HepG2 (cell line): ENCODE measurements at regions of chr5 and their contacts with region 1.

Region 1: DNA sequence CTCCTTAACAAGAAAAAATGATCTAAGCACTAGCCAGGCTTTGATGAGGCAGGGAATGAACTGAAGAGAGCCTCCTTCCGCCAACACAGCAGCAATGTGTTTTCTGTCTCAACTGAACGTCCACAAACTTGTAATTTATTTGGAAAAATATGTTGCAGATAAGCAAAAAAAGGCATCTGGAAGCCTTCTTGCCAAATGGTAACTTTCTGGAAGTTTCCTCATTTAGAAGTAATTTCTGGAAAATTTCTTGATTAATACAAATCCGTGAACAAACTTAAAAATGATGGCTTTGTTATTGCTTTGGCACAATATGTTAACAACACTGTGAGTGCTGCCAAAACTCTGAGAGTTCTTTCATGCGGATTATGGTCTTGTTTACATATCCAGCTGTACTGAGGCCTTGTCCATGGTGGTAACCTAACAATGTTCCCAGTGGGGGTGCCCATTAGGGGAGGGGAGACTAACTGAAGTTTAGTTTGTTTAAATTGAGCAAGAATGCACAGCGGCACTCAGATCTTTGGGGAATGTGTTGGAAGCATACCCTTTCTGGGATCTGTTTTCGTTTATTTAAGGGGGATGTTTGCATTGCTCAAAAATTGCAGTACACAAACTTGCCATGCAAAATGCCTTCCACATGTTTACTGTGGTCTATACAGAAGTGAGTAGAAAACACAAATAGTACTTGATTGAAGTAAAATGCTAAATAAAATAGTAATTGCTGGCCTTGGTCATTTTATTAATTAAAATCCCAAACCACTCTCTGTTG is 334.7 kb downstream of the NR2F1-AS1 start:
- DNase-seq: peak; percentile 100
- ATAC-seq: peak; percentile 100
- H3K4me3 ChIP-seq: peak overlapping the region in 1 of 3 experiments; percentile 32; a peak in 1 of 6 replicates
- H3K27ac ChIP-seq: peak overlapping the region; percentile 88
- H3K4me1 ChIP-seq: peaks cover 72% of the 10 kb centered on the region
- H3K27me3 ChIP-seq: no peaks in the 10 kb centered on the region
- CTCF ChIP-seq: no peak
- EP300 ChIP-seq: peak; percentile 86 to 99
- POLR2A ChIP-seq: no peak
- RAD21 ChIP-seq: peak; percentile 18; the same call in 1 of the 2 replicates

Region 2: DNA sequence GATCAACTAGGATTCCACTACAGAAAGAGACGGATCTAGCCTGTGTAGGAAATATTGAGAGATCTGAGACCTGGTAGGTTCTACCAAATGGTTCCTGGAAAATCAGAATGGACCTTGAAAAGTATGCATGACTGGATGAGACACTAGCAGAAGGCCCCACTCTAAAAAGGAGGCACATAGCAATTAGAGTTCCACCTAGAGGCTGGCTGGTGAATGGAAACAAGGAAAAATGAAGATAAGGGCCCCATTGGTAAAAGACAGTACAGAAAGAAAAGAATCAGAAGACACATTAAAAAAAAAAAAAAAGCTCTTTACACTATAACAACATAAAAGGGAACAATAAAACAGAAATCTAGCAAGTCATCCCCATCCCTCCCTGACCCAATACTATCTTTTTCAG is 183.7 kb before region 1 on chr5:
- CTCF ChIA-PET with region 1: no interaction called
- POLR2A ChIA-PET with region 1: no interaction called
- in situ Hi-C with region 1: no loop called
- intact Hi-C with region 1: loop called (anchors 5 kb)
- DNase-seq: no peak
- ATAC-seq: no peak
- H3K4me3 ChIP-seq: no peak overlapping the region
- H3K27ac ChIP-seq: no peak overlapping the region
- H3K4me1 ChIP-seq: peaks cover 13% of the 10 kb centered on the region; the same call in 1 of the 2 replicates
- H3K27me3 ChIP-seq: no peaks in the 10 kb centered on the region
- CTCF ChIP-seq: peak; percentile 30; the same call in 1 of the 2 replicates
- EP300 ChIP-seq: no peak
- POLR2A ChIP-seq: no peak
- RAD21 ChIP-seq: no peak

Region 3: GRCh38 chr5:93078082-93079038 is 167.9 kb before region 1 on chr5:
- CTCF ChIA-PET with region 1: no interaction called
- POLR2A ChIA-PET with region 1: no interaction called
- in situ Hi-C with region 1: no loop called
- intact Hi-C with region 1: loop called (anchors 5 kb)
- DNase-seq: peak; percentile 98
- ATAC-seq: peak; percentile 99
- H3K4me3 ChIP-seq: peak overlapping the region in 1 of 3 experiments; percentile 13; a peak in 1 of 6 replicates
- H3K27ac ChIP-seq: peak overlapping the region; percentile 76
- H3K4me1 ChIP-seq: peaks cover 37% of the 10 kb centered on the region
- H3K27me3 ChIP-seq: no peaks in the 10 kb centered on the region
- CTCF ChIP-seq: peak; percentile 28; the same call in 1 of the 2 replicates
- EP300 ChIP-seq: peak; percentile 68 to 85; a peak in 2 of 4 replicates
- POLR2A ChIP-seq: peak in 1 of 2 experiments; percentile 60; a peak in 2 of 4 replicates
- RAD21 ChIP-seq: no peak; the same call in 1 of the 2 replicates

Region 4: GRCh38 chr5:93151121-93151520 is 95.2 kb before region 1 on chr5:
- CTCF ChIA-PET with region 1: no interaction called
- POLR2A ChIA-PET with region 1: no interaction called
- in situ Hi-C with region 1: no loop called
- intact Hi-C with region 1: loop called (anchors 10 kb)
- DNase-seq: no peak
- ATAC-seq: no peak
- H3K4me3 ChIP-seq: no peak overlapping the region
- H3K27ac ChIP-seq: no peak overlapping the region
- H3K4me1 ChIP-seq: peaks cover 22% of the 10 kb centered on the region
- H3K27me3 ChIP-seq: no peaks in the 10 kb centered on the region; a peak in 1 of 5 replicates
- CTCF ChIP-seq: no peak
- EP300 ChIP-seq: no peak
- POLR2A ChIP-seq: no peak
- RAD21 ChIP-seq: no peak

Region 5: GRCh38 chr5:93189707-93190120 is 56.6 kb before region 1 on chr5:
- CTCF ChIA-PET with region 1: no interaction called
- POLR2A ChIA-PET with region 1: no interaction called
- in situ Hi-C with region 1: no loop called
- intact Hi-C with region 1: loop called (anchors 1 kb)
- DNase-seq: peak; percentile 76
- ATAC-seq: peak; percentile 62; the same call in 2 of the 3 replicates
- H3K4me3 ChIP-seq: no peak overlapping the region
- H3K27ac ChIP-seq: no peak overlapping the region
- H3K4me1 ChIP-seq: peaks cover 48% of the 10 kb centered on the region
- H3K27me3 ChIP-seq: no peaks in the 10 kb centered on the region
- CTCF ChIP-seq: no peak
- EP300 ChIP-seq: peak in 1 of 2 experiments; percentile 46; a peak in 1 of 4 replicates
- POLR2A ChIP-seq: no peak
- RAD21 ChIP-seq: no peak